Transverse colon (tissue), 4 donors: ENCODE measurements at regions of chr1 and their contacts with region 1.

Region 1: DNA sequence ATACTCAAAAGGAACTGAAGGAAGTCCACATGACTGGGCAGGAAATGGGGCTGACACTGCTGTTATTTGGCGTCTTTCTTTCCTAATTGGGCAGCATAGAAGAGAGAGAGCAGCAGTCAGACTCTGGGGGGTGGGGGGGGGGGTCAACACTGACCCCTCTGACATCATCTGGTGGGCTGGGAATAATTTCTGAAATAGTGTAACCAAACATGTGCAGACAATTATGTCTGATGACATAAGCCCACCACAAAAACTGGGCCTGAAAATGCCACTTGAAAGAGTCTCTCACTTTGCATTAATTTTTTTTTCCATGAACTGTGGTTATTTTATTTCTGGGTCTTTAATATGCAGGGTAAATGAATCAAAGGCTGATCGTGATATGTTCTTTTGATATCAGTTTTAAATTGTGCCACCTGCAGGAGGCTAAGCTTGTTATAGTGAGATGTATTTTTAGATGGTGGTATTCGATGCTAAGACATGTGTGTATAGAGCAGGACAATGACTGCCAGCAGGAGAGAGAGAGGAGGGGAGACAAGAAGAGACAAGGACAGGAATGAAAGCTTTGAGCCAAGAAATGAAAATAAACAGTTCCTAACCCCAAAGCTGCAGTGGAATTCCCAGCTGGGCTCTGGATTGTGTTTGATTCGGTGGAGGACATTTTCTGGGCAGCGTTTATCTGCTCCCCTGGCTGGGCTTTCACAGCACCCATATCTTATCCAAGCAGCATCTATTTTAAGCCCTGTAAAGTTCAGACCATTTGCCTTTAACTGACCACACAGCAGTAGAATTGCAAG is 264.7 kb downstream of the PBX1 start:
- DNase-seq: peak; percentile 27
- H3K4me3 ChIP-seq: no peak overlapping the region
- H3K27ac ChIP-seq: peak overlapping the region; percentile 7 to 76 (median 55)
- H3K4me1 ChIP-seq: peaks cover 0 to 16% (median 9%) of the 10 kb centered on the region in 4 donors
- H3K27me3 ChIP-seq: no peaks in the 10 kb centered on the region
- CTCF ChIP-seq: peak in 1 of 5 experiments; percentile 25
- EP300 ChIP-seq: peak; percentile 26
- POLR2A ChIP-seq: no peak

Region 2: GRCh38 chr1:164953098-164953497 is 129.4 kb after region 1 on chr1:
- in situ Hi-C with region 1: no loop called
- intact Hi-C with region 1: loop called (anchors 10 kb)
- DNase-seq: no peak
- H3K4me3 ChIP-seq: no peak overlapping the region
- H3K27ac ChIP-seq: no peak overlapping the region
- H3K4me1 ChIP-seq: no peaks in the 10 kb centered on the region
- H3K27me3 ChIP-seq: no peaks in the 10 kb centered on the region
- CTCF ChIP-seq: no peak
- EP300 ChIP-seq: no peak
- POLR2A ChIP-seq: no peak